Heart right ventricle (tissue), 16 donors: ENCODE measurements at regions of chr10 and their contacts with region 1.

Region 1: DNA sequence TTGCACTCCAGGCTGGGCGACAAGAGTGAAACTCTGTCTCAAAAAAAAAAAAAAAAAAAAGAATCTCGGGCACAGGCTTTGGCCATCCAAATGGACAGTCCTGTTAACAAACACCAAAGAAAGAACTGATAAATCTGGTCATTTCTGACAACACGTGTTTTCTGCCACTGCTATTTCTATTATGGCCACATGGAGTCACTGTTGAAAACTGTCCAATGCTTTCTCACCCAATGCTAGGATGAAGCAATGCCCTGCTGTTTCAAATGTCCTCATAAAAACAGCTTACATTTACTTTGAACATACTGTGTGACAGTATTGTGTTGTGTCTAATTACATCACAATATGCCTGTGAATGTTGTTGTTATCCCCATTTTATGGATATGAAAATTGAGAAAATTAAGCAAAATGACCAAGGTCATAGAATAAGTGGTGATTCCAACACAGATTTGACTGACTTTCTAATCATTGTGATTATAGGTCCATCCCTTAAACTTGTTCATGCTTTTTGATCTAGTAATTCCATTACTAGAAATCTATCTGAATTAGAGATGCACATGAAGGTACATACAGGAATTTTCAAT is 19.9 kb upstream of the MAP3K8 start:
- DNase-seq: peak in 1 of 2 donors; percentile 57
- ATAC-seq: peak in 6 of 8 donors; percentile 67 to 79 (median 75)
- H3K4me3 ChIP-seq: no peak overlapping the region
- H3K27ac ChIP-seq: no peak overlapping the region
- H3K4me1 ChIP-seq: peaks cover 0 to 27% (median 7%) of the 10 kb centered on the region in 9 donors
- H3K27me3 ChIP-seq: no peaks in the 10 kb centered on the region
- CTCF ChIP-seq: peak; percentile 74 to 85 (median 76)

Region 2: DNA sequence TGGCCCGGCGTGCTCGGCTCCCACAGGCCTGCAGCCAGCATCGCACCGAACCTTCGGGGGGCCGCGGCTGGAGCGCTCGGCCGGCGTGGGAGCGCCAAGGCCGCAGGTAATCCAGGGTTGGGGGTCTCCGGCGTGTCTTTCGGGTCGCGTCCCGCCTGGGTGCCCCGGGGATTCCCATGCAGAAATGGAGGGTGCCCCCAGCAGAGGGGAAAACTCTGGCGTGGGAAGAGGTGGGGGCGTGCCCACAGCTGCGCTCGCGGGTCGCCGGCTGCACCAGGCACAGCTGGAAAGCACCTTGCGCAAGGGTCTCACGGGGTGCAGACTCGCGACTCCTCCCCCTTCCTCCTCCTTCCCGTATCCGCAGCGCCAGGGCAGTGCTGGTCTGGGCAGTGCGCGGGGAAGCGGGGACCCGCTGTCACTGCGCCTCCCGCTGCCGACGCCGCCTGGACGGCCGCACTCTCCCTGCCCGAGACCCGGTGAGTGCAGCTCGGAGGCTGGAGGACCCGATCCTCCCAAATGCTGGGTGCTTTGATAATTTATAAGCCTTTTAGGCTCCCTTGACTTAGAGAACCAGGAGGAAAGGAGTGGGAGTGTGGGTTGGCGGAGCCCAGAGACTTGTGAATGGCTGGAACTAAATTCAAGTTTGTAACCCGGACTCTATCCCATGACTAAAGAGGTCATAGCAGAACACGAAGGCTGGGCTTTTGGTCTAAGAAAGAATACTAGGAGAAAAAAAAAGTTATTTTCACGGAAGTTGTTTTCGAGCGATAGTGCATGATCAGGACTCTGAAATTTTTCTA is 20.4 kb after region 1 on chr10:
- intact Hi-C with region 1: loop called in 1 of 10 experiments (anchors 1 kb)
- DNase-seq: peak; percentile 83 to 85
- ATAC-seq: peak; percentile 56 to 89 (median 70)
- H3K4me3 ChIP-seq: peak overlapping the region; percentile 74 to 98 (median 94)
- H3K27ac ChIP-seq: peak overlapping the region; percentile 90 to 99 (median 99)
- H3K4me1 ChIP-seq: peaks cover 0 to 70% (median 60%) of the 10 kb centered on the region in 9 donors
- H3K27me3 ChIP-seq: no peaks in the 10 kb centered on the region
- CTCF ChIP-seq: no peak

Region 3: DNA sequence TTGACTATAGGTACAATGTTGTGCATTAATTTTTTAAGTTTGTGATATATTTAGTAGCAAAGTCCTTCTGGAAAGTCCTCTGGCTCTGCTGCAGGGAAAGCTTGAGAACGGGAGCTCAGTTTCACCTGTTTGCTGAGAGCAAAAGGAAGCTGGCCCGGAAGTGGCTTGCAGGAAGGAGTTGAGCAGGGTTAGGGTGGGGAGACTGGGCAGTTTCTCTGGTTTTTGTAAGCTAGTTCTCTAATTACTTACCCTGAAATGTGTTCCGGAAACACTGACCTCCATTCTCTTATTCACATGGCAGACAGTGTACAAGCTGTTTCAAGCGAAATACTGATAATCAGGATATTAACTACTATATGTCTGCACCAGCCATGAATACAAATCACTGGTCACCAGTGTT is 42.2 kb after region 1 on chr10:
- intact Hi-C with region 1: loop called in 1 of 10 experiments (anchors 5 kb)
- DNase-seq: no peak
- ATAC-seq: peak in 5 of 8 donors; percentile 26 to 51 (median 38)
- H3K4me3 ChIP-seq: peak overlapping the region in 1 of 10 donors; percentile 8
- H3K27ac ChIP-seq: peak overlapping the region in 8 of 10 donors; percentile 13 to 88 (median 78)
- H3K4me1 ChIP-seq: peaks cover 16 to 75% (median 38%) of the 10 kb centered on the region in 9 donors
- H3K27me3 ChIP-seq: no peaks in the 10 kb centered on the region
- CTCF ChIP-seq: no peak